H1 (cell line): ENCODE measurements at regions of chr5 and their contacts with region 1.

Region 1: DNA sequence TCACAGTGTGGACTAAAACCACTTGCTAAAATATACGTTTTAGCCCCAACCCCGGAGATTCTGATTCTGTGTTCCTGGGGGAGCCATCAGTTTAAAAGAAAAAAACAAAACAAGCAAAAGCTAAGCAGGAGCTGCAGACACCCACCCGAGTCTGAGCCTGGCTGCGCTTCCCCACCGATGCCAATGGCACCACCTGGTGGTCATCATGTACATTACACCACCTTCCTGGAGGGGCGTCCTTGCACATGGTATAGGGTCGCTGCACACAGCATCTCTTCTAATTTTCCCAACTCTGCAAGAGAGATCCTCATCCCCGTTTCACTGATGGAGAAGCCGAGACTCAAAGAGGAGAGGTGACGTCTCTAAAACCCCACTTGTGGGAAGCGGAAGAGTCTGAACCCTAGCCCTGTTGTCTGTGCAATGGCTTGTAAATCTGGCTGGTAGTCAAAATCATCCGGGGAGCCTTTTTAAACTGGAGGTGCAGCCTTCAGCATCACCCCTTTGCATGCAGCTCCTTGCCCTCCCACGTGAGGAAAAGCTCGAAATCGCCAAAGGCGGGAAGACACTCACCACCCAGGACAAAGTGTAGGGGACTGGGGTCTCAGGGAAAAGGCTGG is 23.1 kb upstream of the CNOT6 start:
- DNase-seq: peak in 1 of 2 experiments; percentile 86
- H3K4me3 ChIP-seq: no peak overlapping the region
- H3K27ac ChIP-seq: no peak overlapping the region
- H3K4me1 ChIP-seq: no peaks in the 10 kb centered on the region
- H3K27me3 ChIP-seq: no peaks in the 10 kb centered on the region; a peak in 1 of 7 replicates
- CTCF ChIP-seq: peak in 2 of 3 experiments; percentile 88 to 93; a peak in 3 of 4 replicates
- EP300 ChIP-seq: no peak
- POLR2A ChIP-seq: no peak
- RAD21 ChIP-seq: peak; percentile 94 to 95

Region 2: GRCh38 chr5:180291943-180292831 is 178.9 kb before region 1 on chr5 and contains the start of gene MAPK9:
- CTCF ChIA-PET with region 1: interaction called, 88 read pairs
- POLR2A ChIA-PET with region 1: interaction called, 3 read pairs
- DNase-seq: peak in 1 of 2 experiments; percentile 88
- H3K4me3 ChIP-seq: peak within 1 kb of the TSS; percentile 65 to 97 (median 75)
- H3K27ac ChIP-seq: peak within 1 kb of the TSS; percentile 47; the same call in 1 of the 2 replicates
- H3K4me1 ChIP-seq: peaks cover 0 to 6% (median 5%) of the 10 kb centered on the region in 4 experiments; a peak in 6 of 7 replicates
- H3K27me3 ChIP-seq: no peaks in the 10 kb centered on the region
- CTCF ChIP-seq: no peak
- EP300 ChIP-seq: no peak
- POLR2A ChIP-seq: peak in 1 of 2 experiments; percentile 51; a peak in 1 of 3 replicates
- RAD21 ChIP-seq: no peak
- total RNA-seq, gene MAPK9: 37.9 and 43.7 TPM in 2 replicates

Region 3: DNA sequence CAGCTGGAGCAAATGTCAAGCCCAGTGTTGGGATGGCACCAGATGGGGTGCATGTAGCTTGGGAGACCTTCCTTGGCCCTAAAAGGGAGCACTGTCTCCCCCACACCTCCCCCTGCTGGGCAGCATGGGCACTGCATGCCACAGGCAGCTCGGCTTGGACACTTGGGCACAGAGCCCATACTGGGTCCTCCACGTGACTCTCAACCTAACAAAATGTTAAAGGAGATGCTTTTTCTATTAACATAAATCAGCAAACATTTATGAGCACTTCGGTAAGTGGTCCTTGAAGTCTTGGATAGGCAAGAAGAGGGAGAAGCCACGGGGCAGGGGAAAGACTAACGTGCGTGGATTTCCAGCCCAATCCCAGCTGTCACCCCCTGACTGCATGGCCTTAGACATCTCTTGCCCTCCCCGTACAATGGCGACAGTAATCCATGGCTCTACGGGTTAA is 155.3 kb before region 1 on chr5:
- CTCF ChIA-PET with region 1: interaction called, 11 read pairs
- POLR2A ChIA-PET with region 1: no interaction called
- DNase-seq: peak in 1 of 2 experiments; percentile 93
- H3K4me3 ChIP-seq: no peak overlapping the region
- H3K27ac ChIP-seq: no peak overlapping the region
- H3K4me1 ChIP-seq: no peaks in the 10 kb centered on the region
- H3K27me3 ChIP-seq: no peaks in the 10 kb centered on the region
- CTCF ChIP-seq: peak; percentile 91 to 99 (median 98)
- EP300 ChIP-seq: no peak
- POLR2A ChIP-seq: no peak
- RAD21 ChIP-seq: peak; percentile 59 to 72

Region 4: DNA sequence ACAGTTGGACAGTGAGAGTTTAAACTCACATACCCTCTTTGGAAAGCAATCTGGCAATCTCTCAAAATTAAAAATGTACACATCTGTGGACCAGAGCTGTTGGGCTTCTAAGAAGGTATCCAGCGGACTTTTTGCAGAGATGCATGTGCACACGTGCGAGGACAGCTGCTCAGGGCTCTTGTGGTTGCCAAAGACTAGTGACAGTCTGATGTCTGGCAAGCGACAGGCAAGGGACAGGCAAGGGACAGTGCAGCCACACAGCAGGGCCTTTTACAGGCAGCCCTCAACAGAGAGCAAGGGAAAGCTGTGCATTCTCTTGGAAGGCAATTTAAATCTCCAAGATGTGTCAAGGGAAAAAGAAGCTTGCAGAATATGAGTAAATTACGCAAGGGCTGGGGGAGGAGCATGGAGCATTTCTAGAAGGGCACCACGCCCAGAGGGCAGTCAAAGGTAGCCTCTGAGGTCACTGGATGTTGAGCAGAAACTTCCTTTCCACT is 127.2 kb before region 1 on chr5:
- CTCF ChIA-PET with region 1: interaction called, 14 read pairs
- POLR2A ChIA-PET with region 1: no interaction called
- DNase-seq: no peak
- H3K4me3 ChIP-seq: peak overlapping the region in 1 of 4 experiments; percentile 25; a peak in 2 of 8 replicates
- H3K27ac ChIP-seq: peak overlapping the region; percentile 20; the same call in 1 of the 2 replicates
- H3K4me1 ChIP-seq: peaks cover 36 to 65% (median 47%) of the 10 kb centered on the region in 4 experiments
- H3K27me3 ChIP-seq: no peaks in the 10 kb centered on the region
- CTCF ChIP-seq: no peak
- EP300 ChIP-seq: no peak
- POLR2A ChIP-seq: no peak
- RAD21 ChIP-seq: no peak

Region 5: GRCh38 chr5:180441563-180441962 is 29.5 kb before region 1 on chr5:
- CTCF ChIA-PET with region 1: interaction called, 14 read pairs
- POLR2A ChIA-PET with region 1: no interaction called
- DNase-seq: no peak
- H3K4me3 ChIP-seq: no peak overlapping the region
- H3K27ac ChIP-seq: no peak overlapping the region
- H3K4me1 ChIP-seq: peaks cover 0 to 2% (median 0%) of the 10 kb centered on the region in 4 experiments; a peak in 1 of 7 replicates
- H3K27me3 ChIP-seq: 0 out of 7 replicates have a peak, but pooled peaks cover 0 to 2% (median 0%) of the 10 kb centered on the region in 4 experiments
- CTCF ChIP-seq: no peak
- EP300 ChIP-seq: no peak
- POLR2A ChIP-seq: no peak
- RAD21 ChIP-seq: no peak

Region 6: DNA sequence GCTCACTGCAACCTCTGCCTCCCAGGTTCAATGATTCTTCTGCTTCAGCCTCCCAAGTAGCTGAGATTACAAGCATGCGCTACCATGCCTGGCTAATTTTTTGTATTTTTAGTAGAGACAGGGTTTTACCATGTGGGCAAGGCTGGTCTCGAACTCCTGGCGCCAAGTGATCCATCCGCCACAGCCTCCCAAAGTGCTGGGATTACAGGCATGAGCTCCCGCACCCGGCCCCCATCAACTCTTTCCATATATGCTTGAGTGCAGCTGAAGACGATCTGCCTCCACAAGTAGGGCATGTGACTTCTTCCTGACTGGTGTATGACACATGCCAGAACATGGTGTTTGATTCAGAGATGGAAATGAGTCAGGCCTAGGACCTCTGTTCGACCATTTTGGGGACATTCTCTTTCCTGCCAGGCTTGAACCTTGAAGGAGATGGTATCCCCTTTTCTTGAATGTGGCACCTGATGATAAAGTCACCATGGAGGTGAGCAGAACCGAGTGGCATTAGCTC is 15.6 kb after region 1 on chr5:
- CTCF ChIA-PET with region 1: interaction called, 10 read pairs
- POLR2A ChIA-PET with region 1: interaction called, 3 read pairs
- DNase-seq: no peak
- H3K4me3 ChIP-seq: no peak overlapping the region
- H3K27ac ChIP-seq: no peak overlapping the region
- H3K4me1 ChIP-seq: peaks cover 0 to 5% (median 2%) of the 10 kb centered on the region in 4 experiments; a peak in 4 of 7 replicates
- H3K27me3 ChIP-seq: no peaks in the 10 kb centered on the region
- CTCF ChIP-seq: no peak
- EP300 ChIP-seq: no peak
- POLR2A ChIP-seq: no peak
- RAD21 ChIP-seq: no peak